Mammary epithelial cell (primary cell): ENCODE measurements at regions of chr7 and their contacts with region 1.

Region 1: DNA sequence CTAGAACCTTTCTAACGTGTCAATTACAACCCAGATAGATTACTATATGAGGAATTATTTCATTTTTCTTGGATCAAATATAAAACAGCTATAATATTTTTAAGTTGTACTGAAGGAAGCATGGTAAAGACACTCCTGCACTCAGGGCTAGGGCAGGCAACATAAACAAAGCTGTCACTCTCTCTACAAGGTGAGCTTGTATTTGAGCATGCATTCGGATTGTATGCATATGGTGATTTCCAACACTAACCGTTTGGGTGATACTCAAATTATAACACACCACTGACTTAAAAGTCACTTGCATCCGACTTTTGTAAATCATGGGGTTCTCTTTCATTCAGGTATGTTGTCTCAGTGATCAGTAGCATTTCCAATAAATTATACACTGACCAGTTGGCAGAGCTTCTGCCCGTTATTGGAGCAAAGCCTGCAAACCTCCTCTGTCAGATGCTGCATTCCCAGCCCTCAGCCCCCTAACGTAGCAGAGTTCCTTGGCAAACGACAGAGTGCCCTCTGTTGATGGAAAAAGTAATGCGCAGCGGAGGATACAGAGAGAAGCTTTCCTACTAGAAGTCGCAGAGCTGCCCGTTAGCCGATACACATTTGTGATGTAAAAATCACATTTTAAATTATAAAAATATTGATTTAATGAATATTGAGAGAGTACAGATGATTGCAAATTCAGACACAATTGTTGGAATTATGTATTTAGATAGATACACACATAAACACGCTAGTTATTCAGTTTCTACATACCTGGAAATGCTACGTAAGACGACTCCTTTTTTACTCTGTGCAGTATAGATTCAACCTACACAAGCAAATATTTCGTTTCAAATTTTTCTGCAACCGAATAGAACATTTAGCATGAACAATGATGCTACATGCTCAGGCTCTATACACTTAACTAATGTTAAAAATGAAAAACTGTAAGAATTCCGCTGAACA is 173.9 kb upstream of the SP4 start:
- DNase-seq: peak; percentile 52
- H3K4me3 ChIP-seq: no peak overlapping the region
- H3K27ac ChIP-seq: no peak overlapping the region
- H3K4me1 ChIP-seq: peaks cover 3% of the 10 kb centered on the region
- H3K27me3 ChIP-seq: no peaks in the 10 kb centered on the region
- CTCF ChIP-seq: peak; percentile 83 to 86

Region 2: GRCh38 chr7:20849401-20849800 is 404.6 kb before region 1 on chr7:
- CTCF ChIA-PET with region 1: no interaction called
- dilution Hi-C with region 1: no loop called
- in situ Hi-C with region 1: no loop called
- intact Hi-C with region 1: loop called (anchors 5 kb)
- DNase-seq: peak; percentile 35
- H3K4me3 ChIP-seq: no peak overlapping the region
- H3K27ac ChIP-seq: no peak overlapping the region
- H3K4me1 ChIP-seq: peaks cover 7% of the 10 kb centered on the region
- H3K27me3 ChIP-seq: no peaks in the 10 kb centered on the region
- CTCF ChIP-seq: no peak

Region 3: GRCh38 chr7:21108182-21108581 is 145.8 kb before region 1 on chr7:
- CTCF ChIA-PET with region 1: no interaction called
- dilution Hi-C with region 1: no loop called
- in situ Hi-C with region 1: no loop called
- intact Hi-C with region 1: loop called (anchors 1 kb)
- DNase-seq: no peak
- H3K4me3 ChIP-seq: no peak overlapping the region
- H3K27ac ChIP-seq: no peak overlapping the region
- H3K4me1 ChIP-seq: peaks cover 29% of the 10 kb centered on the region
- H3K27me3 ChIP-seq: no peaks in the 10 kb centered on the region
- CTCF ChIP-seq: no peak

Region 4: DNA sequence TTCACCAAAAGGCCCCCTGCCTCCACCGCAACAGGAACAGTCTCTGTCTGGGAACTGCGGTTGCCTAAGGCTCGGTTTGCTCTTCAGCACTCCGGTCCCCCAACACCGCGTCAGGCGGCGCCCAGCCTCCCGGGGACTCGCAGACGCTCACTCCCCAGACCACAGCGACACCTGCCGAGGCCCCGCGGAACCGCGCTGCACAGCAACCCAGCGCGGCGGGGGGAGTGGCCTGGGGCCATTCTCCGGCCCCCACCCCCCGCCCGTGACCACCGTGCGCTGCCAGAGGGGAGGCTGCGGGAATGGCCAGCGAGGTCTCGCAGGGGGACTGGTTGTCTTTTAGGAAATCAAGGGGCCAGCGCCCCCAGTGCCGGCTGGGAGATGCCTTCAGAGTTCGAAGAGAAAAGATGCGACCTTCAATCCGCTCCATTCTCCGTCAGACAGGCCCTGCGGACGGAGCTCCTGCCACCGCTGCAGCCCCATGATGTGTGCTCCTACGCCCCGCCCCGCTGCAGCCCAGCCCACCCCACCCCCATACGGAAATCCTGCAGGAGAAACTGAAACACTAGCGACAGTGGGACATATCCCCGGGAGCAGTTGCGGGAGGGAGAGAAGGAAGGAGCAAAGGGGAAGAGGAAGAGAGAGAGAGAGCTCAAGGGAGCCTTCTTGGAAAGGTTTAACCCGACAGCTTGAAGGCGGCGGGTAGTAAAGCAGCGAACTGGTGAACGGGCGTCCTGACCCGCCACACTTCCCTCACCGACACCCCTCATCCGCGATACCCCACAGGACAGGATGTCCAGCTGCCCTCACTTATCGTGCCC is 829.1 kb after region 1 on chr7:
- CTCF ChIA-PET with region 1: interaction called, 4 read pairs
- dilution Hi-C with region 1: no loop called
- in situ Hi-C with region 1: no loop called
- intact Hi-C with region 1: loop called (anchors 2 kb)
- DNase-seq: peak; percentile 70
- H3K4me3 ChIP-seq: peak overlapping the region; percentile 51 to 73 (median 70)
- H3K27ac ChIP-seq: no peak overlapping the region
- H3K4me1 ChIP-seq: peaks cover 6% of the 10 kb centered on the region
- H3K27me3 ChIP-seq: no peaks in the 10 kb centered on the region
- CTCF ChIP-seq: peak; percentile 67 to 97